Panc1 (cell line): ENCODE measurements at regions of chr2 and their contacts with region 1.

Region 1: DNA sequence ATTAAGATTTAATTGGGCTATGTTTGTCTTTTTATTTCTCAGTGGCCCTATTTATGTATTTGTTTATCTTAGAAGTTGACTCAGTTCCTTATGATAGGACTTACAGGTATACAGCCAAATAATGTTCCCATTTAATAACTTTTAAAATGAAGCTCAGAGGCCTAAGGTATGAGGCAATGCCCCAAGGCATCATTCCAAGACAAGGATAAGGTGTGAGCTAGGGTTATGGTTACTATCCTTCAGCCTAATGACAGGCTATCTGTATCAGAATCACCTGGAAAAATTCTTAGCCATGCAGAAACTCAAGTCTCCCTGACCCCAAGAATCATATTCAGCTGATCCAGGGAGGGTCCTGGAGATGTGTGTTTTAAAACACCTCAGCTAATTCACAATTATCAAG is 7.4 kb upstream of the NRBP1 start:
- DNase-seq: no peak
- ATAC-seq: no peak
- H3K4me3 ChIP-seq: no peak overlapping the region
- H3K27ac ChIP-seq: no peak overlapping the region
- H3K4me1 ChIP-seq: no peaks in the 10 kb centered on the region
- H3K27me3 ChIP-seq: no peaks in the 10 kb centered on the region
- CTCF ChIP-seq: no peak

Region 2: GRCh38 chr2:27363933-27364332 is 57.1 kb before region 1 on chr2:
- CTCF ChIA-PET with region 1: no interaction called
- POLR2A ChIA-PET with region 1: interaction called, 12 read pairs
- in situ Hi-C with region 1: no loop called
- intact Hi-C with region 1: no loop called
- DNase-seq: no peak
- ATAC-seq: no peak
- H3K4me3 ChIP-seq: no peak overlapping the region
- H3K27ac ChIP-seq: no peak overlapping the region
- H3K4me1 ChIP-seq: peaks cover 4% of the 10 kb centered on the region; the same call in 1 of the 2 replicates
- H3K27me3 ChIP-seq: no peaks in the 10 kb centered on the region
- CTCF ChIP-seq: no peak

Region 3: GRCh38 chr2:27390822-27391679 is 30.0 kb before region 1 on chr2:
- CTCF ChIA-PET with region 1: no interaction called
- POLR2A ChIA-PET with region 1: no interaction called
- in situ Hi-C with region 1: no loop called
- intact Hi-C with region 1: no loop called
- DNase-seq: no peak
- ATAC-seq: no peak
- H3K4me3 ChIP-seq: no peak overlapping the region
- H3K27ac ChIP-seq: no peak overlapping the region
- H3K4me1 ChIP-seq: no peaks in the 10 kb centered on the region
- H3K27me3 ChIP-seq: no peaks in the 10 kb centered on the region
- CTCF ChIP-seq: no peak

Region 4: DNA sequence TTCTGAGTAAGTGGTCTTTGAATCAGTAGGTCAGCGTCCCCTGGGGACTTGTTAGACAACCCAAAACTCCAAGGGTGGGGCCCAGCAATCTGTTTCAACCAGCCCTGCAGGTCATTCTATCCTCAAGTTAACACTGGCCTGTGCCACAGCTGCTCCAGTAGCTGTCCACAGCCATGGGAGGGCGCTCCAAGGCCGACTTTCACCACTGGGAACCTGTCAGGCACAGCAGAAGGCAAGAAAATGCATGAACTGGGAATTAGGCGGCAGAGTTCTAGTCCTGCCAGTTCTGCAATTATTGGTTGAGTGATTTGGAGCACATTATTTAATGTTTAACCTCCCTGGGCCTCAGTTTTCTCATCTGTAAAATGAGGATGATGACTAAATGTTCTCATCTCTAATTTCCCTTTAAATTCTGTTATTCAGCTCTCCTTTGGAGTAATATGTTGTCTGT is 333.1 kb after region 1 on chr2:
- CTCF ChIA-PET with region 1: interaction called, 11 read pairs
- POLR2A ChIA-PET with region 1: no interaction called
- in situ Hi-C with region 1: no loop called
- intact Hi-C with region 1: no loop called
- DNase-seq: peak; percentile 74
- ATAC-seq: peak; percentile 94
- H3K4me3 ChIP-seq: no peak overlapping the region
- H3K27ac ChIP-seq: no peak overlapping the region
- H3K4me1 ChIP-seq: peaks cover 9% of the 10 kb centered on the region; the same call in 1 of the 2 replicates
- H3K27me3 ChIP-seq: no peaks in the 10 kb centered on the region
- CTCF ChIP-seq: peak; percentile 93